PC-9 (cell line): ENCODE measurements at regions of chr16 and their contacts with region 1.

Region 1: GRCh38 chr16:50665128-50665878 is 15.8 kb downstream of the SNX20 start:
- DNase-seq: peak; percentile 51 to 79
- H3K4me3 ChIP-seq: peak overlapping the region; percentile 45; the same call in 1 of the 2 replicates
- H3K27ac ChIP-seq: no peak overlapping the region
- H3K4me1 ChIP-seq: peaks cover 14% of the 10 kb centered on the region
- H3K27me3 ChIP-seq: no peaks in the 10 kb centered on the region
- CTCF ChIP-seq: peak; percentile 93

Region 2: GRCh38 chr16:50326949-50327402 is 338.3 kb before region 1 on chr16:
- CTCF ChIA-PET with region 1: no interaction called
- POLR2A ChIA-PET with region 1: no interaction called
- intact Hi-C with region 1: loop called (anchors 5 kb)
- DNase-seq: no peak
- H3K4me3 ChIP-seq: no peak overlapping the region
- H3K27ac ChIP-seq: no peak overlapping the region
- H3K4me1 ChIP-seq: no peaks in the 10 kb centered on the region
- H3K27me3 ChIP-seq: no peaks in the 10 kb centered on the region
- CTCF ChIP-seq: peak; percentile 57

Region 3: DNA sequence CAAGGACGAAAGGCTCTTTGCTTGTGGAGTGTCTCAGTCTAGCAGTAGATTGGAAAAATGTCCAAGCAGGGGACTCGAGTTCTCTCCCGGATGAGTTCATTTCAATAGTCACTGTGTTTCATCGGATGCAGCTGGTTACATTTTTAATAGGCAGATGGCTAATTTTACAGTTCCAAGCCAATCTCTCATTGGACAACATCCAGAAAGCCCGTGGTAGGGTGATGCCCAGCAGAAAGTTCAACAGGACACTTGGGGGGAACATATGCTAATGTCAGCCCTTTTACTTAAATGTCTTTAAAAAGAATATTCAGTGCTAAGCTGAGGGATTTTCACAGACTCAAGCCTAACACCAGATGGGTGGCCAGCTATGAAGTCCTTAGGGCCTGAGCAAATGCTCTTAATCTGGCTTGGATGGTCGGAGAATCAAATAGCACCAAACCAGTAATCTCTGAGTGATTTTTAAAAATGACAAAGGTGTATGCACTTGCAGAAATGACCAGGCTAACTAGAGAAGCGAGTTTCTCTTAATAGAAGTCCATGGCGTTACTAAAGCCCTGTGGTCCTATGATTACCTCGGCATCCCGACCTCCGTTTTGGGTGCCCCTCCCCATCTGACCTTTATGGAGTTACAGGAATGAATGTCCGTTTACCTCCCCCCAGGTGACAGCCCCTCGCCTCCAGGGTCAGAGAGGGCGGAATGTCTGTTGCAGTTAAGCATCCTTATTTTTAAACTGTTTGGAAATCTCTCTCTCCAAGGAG is 775.0 kb after region 1 on chr16:
- CTCF ChIA-PET with region 1: no interaction called
- POLR2A ChIA-PET with region 1: no interaction called
- intact Hi-C with region 1: no loop called
- DNase-seq: no peak
- H3K4me3 ChIP-seq: no peak overlapping the region
- H3K27ac ChIP-seq: no peak overlapping the region
- H3K4me1 ChIP-seq: no peaks in the 10 kb centered on the region
- H3K27me3 ChIP-seq: peaks cover 58% of the 10 kb centered on the region
- CTCF ChIP-seq: no peak